Heart right ventricle (tissue), 16 donors: ENCODE measurements at regions of chr12 and their contacts with region 1.

Region 1: GRCh38 chr12:401235-402028 is at the start of gene CCDC77:
- DNase-seq: peak; percentile 87 to 92
- ATAC-seq: peak; percentile 98 to 100 (median 100)
- H3K4me3 ChIP-seq: peak within 1 kb of the TSS; percentile 49 to 80 (median 72)
- H3K27ac ChIP-seq: peak within 1 kb of the TSS in 7 of 10 donors; percentile 4 to 74 (median 58)
- H3K4me1 ChIP-seq: peaks cover 4 to 19% (median 11%) of the 10 kb centered on the region in 9 donors
- H3K27me3 ChIP-seq: no peaks in the 10 kb centered on the region
- CTCF ChIP-seq: peak in 4 of 9 donors; percentile 35 to 61 (median 55)
- total RNA-seq, gene CCDC77: 1.8 to 4.5 (median 3.6) TPM

Region 2: DNA sequence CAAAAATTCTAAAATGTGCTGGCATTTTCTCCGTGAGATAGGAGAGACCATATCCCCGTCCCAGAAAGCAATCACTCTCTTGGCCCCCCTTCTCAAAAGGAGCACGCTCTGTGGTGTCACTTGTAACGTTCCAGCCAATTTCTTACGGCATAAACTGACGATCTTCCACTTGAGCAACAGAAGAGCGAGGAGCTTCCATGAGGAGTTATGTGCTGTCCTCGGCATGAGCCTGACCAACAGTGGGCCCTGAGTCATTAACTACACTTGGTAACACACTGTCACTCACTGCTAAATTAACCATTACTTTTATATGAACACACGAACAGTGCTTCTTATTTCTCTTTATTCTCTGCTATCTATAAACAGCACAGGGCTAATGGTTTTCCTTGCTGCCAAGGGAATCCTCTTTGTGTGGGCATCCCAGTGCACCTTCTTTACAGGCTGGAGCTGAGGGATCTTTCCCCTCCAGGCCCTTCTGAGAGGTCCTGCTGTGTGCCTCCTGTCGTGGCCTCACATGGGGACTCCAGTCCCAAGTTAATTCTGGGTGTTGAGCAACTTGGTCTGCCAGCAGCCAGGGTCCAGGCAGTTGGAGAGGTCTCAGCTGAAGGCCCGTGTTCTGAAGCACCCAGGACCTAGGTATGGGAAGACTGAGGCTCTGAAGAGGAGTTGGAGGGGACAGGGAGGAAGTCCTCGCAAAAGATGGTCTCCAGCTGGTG is 148.2 kb before region 1 on chr12:
- intact Hi-C with region 1: no loop called
- DNase-seq: no peak
- ATAC-seq: no peak
- H3K4me3 ChIP-seq: no peak overlapping the region
- H3K27ac ChIP-seq: no peak overlapping the region
- H3K4me1 ChIP-seq: no peaks in the 10 kb centered on the region
- H3K27me3 ChIP-seq: peaks cover 0 to 14% (median 0%) of the 10 kb centered on the region in 7 donors
- CTCF ChIP-seq: no peak

Region 3: GRCh38 chr12:389139-390096 is 12.0 kb before region 1 on chr12 and contains the start of gene KDM5A:
- intact Hi-C with region 1: loop called in 1 of 10 experiments (anchors 1 kb)
- DNase-seq: peak; percentile 87 to 93
- ATAC-seq: peak; percentile 98 to 100 (median 99)
- H3K4me3 ChIP-seq: peak within 1 kb of the TSS; percentile 56 to 96 (median 86)
- H3K27ac ChIP-seq: peak within 1 kb of the TSS; percentile 82 to 96 (median 92)
- H3K4me1 ChIP-seq: peaks cover 0 to 44% (median 36%) of the 10 kb centered on the region in 9 donors
- H3K27me3 ChIP-seq: no peaks in the 10 kb centered on the region
- CTCF ChIP-seq: peak in 3 of 9 donors; percentile 5 to 22 (median 8)
- total RNA-seq, gene KDM5A: 28.6 to 46.0 (median 34.8) TPM